ENCODE measurements at regions of chr5 and their contacts with region 1.

Region 1: DNA sequence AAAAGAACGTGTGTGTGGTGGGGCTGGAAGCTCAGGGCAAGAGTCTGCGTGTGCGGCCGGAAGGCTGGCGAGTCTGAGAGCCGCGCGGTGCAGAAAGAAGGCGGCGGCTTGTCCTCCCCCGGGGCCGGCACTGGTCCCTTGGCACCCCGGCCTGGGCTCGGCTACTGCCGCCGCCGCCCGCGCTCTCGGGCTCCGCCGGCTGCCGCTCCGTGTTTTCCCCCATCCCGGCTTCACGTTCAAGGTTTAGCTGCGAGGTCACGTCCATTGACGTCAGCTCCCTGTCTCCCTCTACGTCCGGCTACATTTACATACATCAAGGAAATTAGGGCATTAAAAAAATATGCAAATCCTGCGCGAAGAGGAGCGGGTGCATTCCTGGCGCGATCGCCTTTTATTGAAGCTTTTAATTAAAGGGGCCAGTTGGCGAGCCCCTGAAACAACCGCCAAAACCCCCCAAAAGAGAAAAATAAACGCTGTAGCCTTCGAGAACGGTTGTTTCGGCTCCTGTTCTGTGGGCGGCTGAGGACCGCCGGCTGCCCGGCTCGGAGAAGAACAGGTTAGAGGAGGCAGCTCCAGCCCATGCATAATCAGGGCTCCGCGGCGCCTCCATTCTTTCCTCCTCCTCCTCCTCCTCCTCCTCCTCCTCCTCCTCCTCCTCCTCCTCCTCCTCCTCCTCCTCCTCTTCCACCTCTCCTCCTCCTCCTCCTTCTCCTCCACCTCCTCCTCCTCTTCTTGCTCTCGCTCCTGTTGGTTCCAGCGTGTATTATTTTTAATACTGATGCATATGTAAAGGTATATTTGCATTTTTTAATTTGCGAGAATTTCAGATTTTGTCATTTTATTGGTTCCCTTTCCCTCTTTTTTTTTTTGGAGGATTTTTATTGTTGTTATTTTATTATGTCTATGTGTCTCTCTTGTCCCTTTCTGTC is 207.0 kb downstream of the MEF2C start:
- DNase-seq: peak in 1 of 2 donors; percentile 85
- H3K4me3 ChIP-seq: peak overlapping the region; percentile 34 to 56 (median 40)
- H3K27ac ChIP-seq: peak overlapping the region in 2 of 5 donors; percentile 11 to 26
- H3K4me1 ChIP-seq: peaks cover 26 to 43% (median 36%) of the 10 kb centered on the region in 4 donors
- H3K27me3 ChIP-seq: peaks cover 33 to 100% (median 96%) of the 10 kb centered on the region in 3 donors
- CTCF ChIP-seq: no peak
- EP300 ChIP-seq: no peak
- POLR2A ChIP-seq: no peak

Region 2: GRCh38 chr5:88130211-88130815 is 545.7 kb before region 1 on chr5:
- intact Hi-C with region 1: loop called (anchors 10 kb)
- DNase-seq: no peak
- H3K4me3 ChIP-seq: no peak overlapping the region
- H3K27ac ChIP-seq: no peak overlapping the region
- H3K4me1 ChIP-seq: no peaks in the 10 kb centered on the region
- H3K27me3 ChIP-seq: peaks cover 0 to 14% (median 0%) of the 10 kb centered on the region in 3 donors
- CTCF ChIP-seq: no peak
- EP300 ChIP-seq: no peak
- POLR2A ChIP-seq: no peak